Activated CD4-positive, alpha-beta T cell treated with anti-CD3 and anti-CD28 coated beads for 36 hours (primary cell): ENCODE measurements at regions of chr1 and their contacts with region 1.

Region 1: DNA sequence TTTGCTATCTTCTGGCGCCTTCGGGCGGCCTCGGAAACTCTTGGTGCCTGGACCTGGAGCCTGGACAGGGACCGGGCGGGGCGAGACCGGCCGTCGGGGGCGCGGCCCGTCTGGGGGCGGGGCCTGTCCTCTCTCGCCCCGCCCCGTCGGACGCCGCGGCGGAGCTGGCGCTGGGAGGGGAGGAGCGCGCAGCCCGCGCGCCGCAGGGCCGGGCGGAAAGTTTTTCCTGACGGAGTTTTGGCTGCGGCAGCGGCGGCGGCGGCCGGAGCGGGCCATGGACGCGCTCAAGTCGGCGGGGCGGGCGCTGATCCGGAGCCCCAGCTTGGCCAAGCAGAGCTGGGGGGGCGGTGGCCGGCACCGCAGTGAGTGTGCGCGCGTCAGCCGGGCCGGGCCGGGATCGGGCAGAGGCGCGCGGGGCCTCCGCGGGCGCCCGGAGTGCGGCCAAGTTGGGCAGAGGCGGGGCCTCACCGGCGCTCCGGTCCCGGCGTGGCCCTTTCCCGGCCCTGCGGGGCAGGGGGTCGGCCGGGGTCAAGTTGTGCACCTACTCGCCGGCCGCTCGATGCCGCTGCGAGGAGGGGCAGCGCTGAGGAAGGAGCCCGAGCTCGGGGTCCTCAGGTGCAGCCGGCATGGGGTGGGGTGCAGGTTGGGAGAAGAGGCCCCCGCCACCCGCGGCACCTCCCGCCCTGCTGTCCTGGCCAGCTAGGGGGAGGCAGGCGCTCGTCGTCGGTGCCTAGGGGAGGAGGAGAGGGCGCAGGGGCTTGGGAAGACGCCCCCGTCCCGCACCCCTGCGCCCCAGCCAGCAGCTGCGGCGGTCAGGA is at the start of gene LDLRAP1:
- DNase-seq: peak; percentile 78
- ATAC-seq: peak; percentile 89
- H3K4me3 Mint-ChIP-seq: peak within 1 kb of the TSS; percentile 80
- H3K27ac Mint-ChIP-seq: peak within 1 kb of the TSS; percentile 75
- H3K4me1 Mint-ChIP-seq: peaks cover 34% of the 10 kb centered on the region
- H3K27me3 Mint-ChIP-seq: no peaks in the 10 kb centered on the region
- total RNA-seq, gene LDLRAP1: 13.0 to 14.6 TPM

Region 2: DNA sequence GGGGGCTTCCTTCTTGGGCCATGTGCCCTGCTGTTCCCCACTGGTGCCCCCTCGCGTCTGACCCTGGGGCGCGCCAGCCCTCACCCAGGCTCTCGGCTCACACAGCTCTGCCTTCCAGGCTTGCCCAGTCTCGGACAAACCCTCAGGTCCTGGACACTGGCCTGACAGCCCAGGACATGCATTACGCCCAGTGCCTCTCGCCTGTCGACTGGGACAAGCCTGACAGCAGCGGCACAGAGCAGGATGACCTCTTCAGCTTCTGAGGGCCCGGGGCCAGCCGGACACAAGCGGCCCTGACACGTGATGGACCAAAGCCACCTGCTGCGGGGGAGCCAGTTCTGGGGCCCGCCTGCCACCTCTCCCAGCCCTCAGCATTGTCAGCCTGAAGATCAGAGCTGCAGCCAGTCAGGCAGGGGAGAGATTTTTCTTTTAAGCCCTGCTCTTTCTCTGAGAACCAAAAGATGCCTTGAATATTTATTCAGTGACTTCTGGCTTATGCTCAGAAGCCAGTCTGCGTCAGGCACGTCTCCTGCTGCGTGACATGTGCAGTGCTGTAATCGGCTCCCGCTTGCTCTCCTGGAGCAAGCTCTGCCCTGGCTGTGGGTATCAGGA is 23.2 kb after region 1 on chr1:
- CTCF ChIA-PET with region 1: interaction called, 10 read pairs
- POLR2A ChIA-PET with region 1: interaction called, 11 read pairs
- intact Hi-C with region 1: no loop called
- DNase-seq: peak; percentile 68
- ATAC-seq: peak; percentile 18
- H3K4me3 Mint-ChIP-seq: peak overlapping the region; percentile 9
- H3K27ac Mint-ChIP-seq: peak overlapping the region; percentile 69
- H3K4me1 Mint-ChIP-seq: peaks cover 82% of the 10 kb centered on the region
- H3K27me3 Mint-ChIP-seq: no peaks in the 10 kb centered on the region